ENCODE measurements at regions of chr3 and their contacts with region 1.

Region 1: GRCh38 chr3:20039766-20040475 is at the start of gene KAT2B:
- DNase-seq: peak; percentile 91
- H3K4me3 Mint-ChIP-seq: peak within 1 kb of the TSS; percentile 91
- H3K27ac Mint-ChIP-seq: peak within 1 kb of the TSS; percentile 95
- H3K4me1 Mint-ChIP-seq: peaks cover 49% of the 10 kb centered on the region
- H3K27me3 Mint-ChIP-seq: no peaks in the 10 kb centered on the region
- total RNA-seq, gene KAT2B: 43.4 to 49.0 TPM

Region 2: GRCh38 chr3:19885468-19885867 is 154.5 kb before region 1 on chr3:
- CTCF ChIA-PET with region 1: no interaction called
- POLR2A ChIA-PET with region 1: no interaction called
- intact Hi-C with region 1: loop called (anchors 2 kb)
- DNase-seq: no peak
- H3K4me3 Mint-ChIP-seq: no peak overlapping the region
- H3K27ac Mint-ChIP-seq: no peak overlapping the region
- H3K4me1 Mint-ChIP-seq: no peaks in the 10 kb centered on the region
- H3K27me3 Mint-ChIP-seq: peaks cover 2% of the 10 kb centered on the region

Region 3: GRCh38 chr3:19937459-19938294 is 102.2 kb before region 1 on chr3:
- CTCF ChIA-PET with region 1: interaction called, 3 read pairs
- POLR2A ChIA-PET with region 1: interaction called, 13 read pairs
- intact Hi-C with region 1: loop called (anchors 1 kb)
- DNase-seq: peak; percentile 27
- H3K4me3 Mint-ChIP-seq: no peak overlapping the region
- H3K27ac Mint-ChIP-seq: peak overlapping the region; percentile 75
- H3K4me1 Mint-ChIP-seq: peaks cover 29% of the 10 kb centered on the region
- H3K27me3 Mint-ChIP-seq: peaks cover 12% of the 10 kb centered on the region

Region 4: GRCh38 chr3:19946832-19947548 is 92.9 kb before region 1 on chr3 and contains the start of gene RAB5A:
- CTCF ChIA-PET with region 1: interaction called, 3 read pairs
- POLR2A ChIA-PET with region 1: interaction called, 20 read pairs
- intact Hi-C with region 1: loop called (anchors 1 kb)
- DNase-seq: peak; percentile 98
- H3K4me3 Mint-ChIP-seq: peak within 1 kb of the TSS; percentile 93
- H3K27ac Mint-ChIP-seq: peak within 1 kb of the TSS; percentile 99
- H3K4me1 Mint-ChIP-seq: peaks cover 44% of the 10 kb centered on the region
- H3K27me3 Mint-ChIP-seq: no peaks in the 10 kb centered on the region
- total RNA-seq, gene RAB5A: 55.6 to 65.3 TPM

Region 5: GRCh38 chr3:20060974-20061685 is 21.2 kb after region 1 on chr3:
- CTCF ChIA-PET with region 1: interaction called, 9 read pairs
- POLR2A ChIA-PET with region 1: interaction called, 88 read pairs
- intact Hi-C with region 1: loop called (anchors 1 kb)
- DNase-seq: peak; percentile 56
- H3K4me3 Mint-ChIP-seq: no peak overlapping the region
- H3K27ac Mint-ChIP-seq: peak overlapping the region; percentile 72
- H3K4me1 Mint-ChIP-seq: peaks cover 54% of the 10 kb centered on the region
- H3K27me3 Mint-ChIP-seq: no peaks in the 10 kb centered on the region

Region 6: GRCh38 chr3:20160230-20160629 is 120.3 kb after region 1 on chr3:
- CTCF ChIA-PET with region 1: no interaction called
- POLR2A ChIA-PET with region 1: no interaction called
- intact Hi-C with region 1: no loop called
- DNase-seq: no peak
- H3K4me3 Mint-ChIP-seq: no peak overlapping the region
- H3K27ac Mint-ChIP-seq: no peak overlapping the region
- H3K4me1 Mint-ChIP-seq: peaks cover 13% of the 10 kb centered on the region
- H3K27me3 Mint-ChIP-seq: no peaks in the 10 kb centered on the region

Region 7: DNA sequence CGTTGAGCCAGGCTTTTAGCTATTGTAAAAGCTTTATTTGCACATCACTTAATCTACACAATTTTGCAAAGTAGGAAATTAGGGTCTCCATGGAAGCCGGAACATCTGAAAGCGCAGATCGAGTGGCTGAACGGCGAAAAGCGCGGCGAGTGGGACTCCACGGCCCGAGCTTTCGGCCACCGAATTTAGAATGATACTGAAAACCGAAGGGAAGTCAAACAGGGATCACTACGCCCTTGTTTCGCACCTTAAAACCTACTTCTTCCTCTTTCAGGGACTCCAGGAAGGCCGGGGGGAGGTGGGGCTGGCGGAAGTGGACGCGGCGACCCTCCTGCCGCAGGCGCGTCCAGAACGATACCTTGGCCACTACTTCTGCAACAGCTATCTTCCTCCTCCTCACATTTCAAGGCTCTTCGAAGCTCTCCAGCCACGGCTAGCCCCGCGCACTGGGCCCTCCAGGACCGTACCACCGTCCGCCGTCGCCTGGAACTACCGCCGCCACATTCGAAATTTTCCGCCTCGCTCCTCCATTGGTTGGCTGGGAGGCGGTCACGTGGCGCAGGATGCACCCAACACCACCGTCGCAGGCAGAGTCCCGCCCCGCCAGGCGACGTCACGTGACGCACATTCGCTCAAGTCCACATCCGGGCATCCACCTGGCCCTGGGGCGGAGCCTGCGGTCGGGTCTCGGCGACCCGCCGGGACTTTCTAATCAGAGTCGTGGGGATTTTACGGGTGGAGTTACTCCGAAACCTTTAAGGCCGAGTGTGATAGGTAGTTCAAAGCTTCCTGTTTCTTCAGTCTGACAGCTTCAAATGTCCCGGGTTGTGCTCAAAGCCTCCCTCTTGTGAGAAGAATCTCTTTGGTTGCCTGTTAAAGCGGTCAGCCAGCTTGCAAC is 146.0 kb after region 1 on chr3 and contains the start of gene SGO1:
- CTCF ChIA-PET with region 1: interaction called, 8 read pairs
- POLR2A ChIA-PET with region 1: interaction called, 7 read pairs
- intact Hi-C with region 1: loop called (anchors 1 kb)
- DNase-seq: peak; percentile 100
- H3K4me3 Mint-ChIP-seq: no peak within 1 kb of the TSS
- H3K27ac Mint-ChIP-seq: no peak within 1 kb of the TSS
- H3K4me1 Mint-ChIP-seq: no peaks in the 10 kb centered on the region
- H3K27me3 Mint-ChIP-seq: no peaks in the 10 kb centered on the region
- total RNA-seq, gene SGO1: 37.4 to 37.8 TPM

Measured in activated CD4-positive, alpha-beta memory T cell treated with anti-CD3 and anti-CD28 coated beads for 36 hours (primary cell).